Activated CD8-positive, alpha-beta T cell treated with anti-CD3 and anti-CD28 coated beads for 36 hours (primary cell): ENCODE measurements at regions of chr1 and their contacts with region 1.

Region 1: GRCh38 chr1:154558575-154559465 is at the start of gene UBE2Q1:
- DNase-seq: peak; percentile 100
- ATAC-seq: peak; percentile 92
- H3K4me3 Mint-ChIP-seq: peak within 1 kb of the TSS; percentile 95
- H3K27ac Mint-ChIP-seq: peak within 1 kb of the TSS; percentile 96
- H3K4me1 Mint-ChIP-seq: peaks cover 23% of the 10 kb centered on the region
- H3K27me3 Mint-ChIP-seq: no peaks in the 10 kb centered on the region
- CTCF ChIP-seq: no peak
- total RNA-seq, gene UBE2Q1: 71.2 to 74.6 TPM

Region 2: DNA sequence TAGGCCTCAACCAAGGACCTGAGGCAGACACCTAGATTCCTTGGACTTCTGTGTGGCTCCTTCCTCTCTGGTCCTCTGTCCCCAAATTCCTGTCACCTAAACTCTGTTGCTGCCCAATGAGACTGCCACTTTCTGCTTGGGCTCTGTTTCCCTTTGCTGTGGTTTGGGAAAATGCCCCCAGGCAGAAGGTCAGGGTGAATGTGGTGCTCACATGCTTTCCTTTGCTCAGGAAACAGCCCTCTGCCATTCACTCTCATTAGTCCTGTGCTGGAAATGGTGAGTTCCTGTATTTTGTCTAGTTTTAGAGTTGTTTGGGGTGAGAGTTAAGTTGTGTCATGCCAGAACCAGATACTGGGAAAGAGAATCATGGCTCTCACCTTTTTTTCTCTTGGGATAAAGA is 33.9 kb before region 1 on chr1:
- CTCF ChIA-PET with region 1: no interaction called
- POLR2A ChIA-PET with region 1: no interaction called
- intact Hi-C with region 1: no loop called
- DNase-seq: no peak
- ATAC-seq: no peak
- H3K4me3 Mint-ChIP-seq: no peak overlapping the region
- H3K27ac Mint-ChIP-seq: no peak overlapping the region
- H3K4me1 Mint-ChIP-seq: no peaks in the 10 kb centered on the region
- H3K27me3 Mint-ChIP-seq: peaks cover 4% of the 10 kb centered on the region
- CTCF ChIP-seq: no peak

Region 3: GRCh38 chr1:154574716-154575115 is 15.9 kb after region 1 on chr1:
- CTCF ChIA-PET with region 1: interaction called, 23 read pairs
- POLR2A ChIA-PET with region 1: interaction called, 5 read pairs
- intact Hi-C with region 1: no loop called
- DNase-seq: peak; percentile 27
- ATAC-seq: peak; percentile 28
- H3K4me3 Mint-ChIP-seq: no peak overlapping the region
- H3K27ac Mint-ChIP-seq: no peak overlapping the region
- H3K4me1 Mint-ChIP-seq: no peaks in the 10 kb centered on the region
- H3K27me3 Mint-ChIP-seq: no peaks in the 10 kb centered on the region
- CTCF ChIP-seq: no peak

Region 4: GRCh38 chr1:154607609-154608396 is 49.0 kb after region 1 on chr1 and contains the start of gene ADAR:
- CTCF ChIA-PET with region 1: interaction called, 10 read pairs
- POLR2A ChIA-PET with region 1: interaction called, 3 read pairs
- intact Hi-C with region 1: no loop called
- DNase-seq: peak; percentile 95
- ATAC-seq: peak; percentile 78
- H3K4me3 Mint-ChIP-seq: peak within 1 kb of the TSS; percentile 89
- H3K27ac Mint-ChIP-seq: peak within 1 kb of the TSS; percentile 98
- H3K4me1 Mint-ChIP-seq: peaks cover 71% of the 10 kb centered on the region
- H3K27me3 Mint-ChIP-seq: no peaks in the 10 kb centered on the region
- CTCF ChIP-seq: no peak
- total RNA-seq, gene ADAR: 261 to 267 TPM

Region 5: DNA sequence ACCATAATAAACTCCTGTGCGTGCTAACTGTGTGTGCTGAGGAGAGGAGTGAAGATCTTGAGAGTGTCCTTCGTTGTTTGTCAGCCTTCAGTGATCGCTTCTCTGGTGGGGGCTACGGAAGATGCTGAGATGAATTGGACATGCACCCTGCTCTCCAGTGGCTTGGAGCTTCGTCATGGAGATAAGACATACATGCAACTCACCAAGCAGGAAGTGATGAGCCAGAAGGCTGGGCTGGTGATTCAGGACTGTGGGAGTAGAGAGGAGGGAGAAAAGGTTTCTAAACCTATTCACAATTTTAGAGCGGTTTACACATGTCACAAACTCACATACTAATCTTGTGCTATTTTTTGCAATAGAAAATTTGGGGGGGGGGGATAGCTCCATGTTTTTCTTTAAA is 178.0 kb after region 1 on chr1:
- CTCF ChIA-PET with region 1: no interaction called
- POLR2A ChIA-PET with region 1: no interaction called
- intact Hi-C with region 1: no loop called
- DNase-seq: peak; percentile 75
- ATAC-seq: peak; percentile 93
- H3K4me3 Mint-ChIP-seq: no peak overlapping the region
- H3K27ac Mint-ChIP-seq: peak overlapping the region; percentile 72
- H3K4me1 Mint-ChIP-seq: peaks cover 38% of the 10 kb centered on the region
- H3K27me3 Mint-ChIP-seq: peaks cover 9% of the 10 kb centered on the region
- CTCF ChIP-seq: no peak

Region 6: DNA sequence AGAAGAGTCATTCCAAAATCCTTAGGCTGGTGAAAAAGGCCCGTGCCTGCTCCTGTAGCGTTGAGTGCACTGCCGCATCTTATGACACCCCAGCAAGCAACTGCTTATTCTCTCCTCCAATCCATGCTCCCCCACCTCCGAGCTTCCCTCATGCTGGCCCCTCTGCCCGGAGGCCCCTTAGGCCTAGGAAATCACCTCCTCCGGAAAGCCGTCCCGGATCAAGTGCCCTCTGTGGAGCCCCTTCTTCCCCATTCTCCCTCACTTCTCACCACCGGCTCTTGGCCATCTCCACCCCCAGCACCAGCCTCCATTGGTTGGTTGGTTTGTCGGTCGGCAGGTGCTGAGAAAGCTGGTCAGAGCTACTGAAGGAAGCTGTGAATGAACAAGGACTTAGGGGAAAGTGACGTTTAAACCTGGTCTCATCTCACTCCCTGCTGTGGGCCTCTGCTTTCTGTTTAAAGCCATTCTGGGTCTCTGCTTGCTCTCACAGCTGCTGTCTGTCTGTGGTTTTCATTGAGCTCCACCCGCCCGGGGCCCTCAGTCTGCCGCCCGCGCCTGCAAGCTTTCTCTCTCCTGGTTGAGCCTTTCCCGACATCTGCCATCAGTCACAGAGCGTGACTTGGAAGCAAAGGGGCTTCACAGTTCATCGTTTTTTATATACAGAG is 189.1 kb after region 1 on chr1:
- CTCF ChIA-PET with region 1: interaction called, 22 read pairs
- POLR2A ChIA-PET with region 1: interaction called, 3 read pairs
- intact Hi-C with region 1: no loop called
- DNase-seq: peak; percentile 78
- ATAC-seq: peak; percentile 84
- H3K4me3 Mint-ChIP-seq: peak overlapping the region; percentile 68
- H3K27ac Mint-ChIP-seq: peak overlapping the region; percentile 90
- H3K4me1 Mint-ChIP-seq: peaks cover 68% of the 10 kb centered on the region
- H3K27me3 Mint-ChIP-seq: no peaks in the 10 kb centered on the region
- CTCF ChIP-seq: no peak

Region 7: DNA sequence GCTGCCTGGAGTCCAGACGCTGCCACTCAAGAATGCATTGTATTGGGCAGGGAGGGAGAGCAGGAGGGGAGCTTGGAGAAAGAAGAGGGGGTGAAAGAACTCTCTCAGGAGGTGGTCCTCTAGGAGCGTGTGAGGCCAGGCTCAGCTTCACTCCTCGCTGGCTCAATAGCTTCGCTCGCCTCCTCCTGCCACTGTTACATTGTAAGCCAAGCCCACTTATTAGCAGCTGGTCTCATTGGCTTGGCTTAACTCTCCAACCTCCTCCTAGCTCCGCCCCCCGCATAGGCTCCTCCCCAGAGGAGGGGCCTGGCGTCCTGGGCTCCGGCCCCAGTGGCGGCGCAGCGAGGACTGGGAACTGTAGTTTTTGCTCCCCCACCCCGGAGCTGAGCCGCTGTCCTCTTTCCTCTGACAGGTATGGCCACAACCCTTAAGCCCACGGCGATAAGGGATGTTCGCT is 311.3 kb after region 1 on chr1 and contains the start of gene KCNN3:
- CTCF ChIA-PET with region 1: interaction called, 11 read pairs
- POLR2A ChIA-PET with region 1: no interaction called
- intact Hi-C with region 1: loop called (anchors 10 kb)
- DNase-seq: peak; percentile 85
- ATAC-seq: peak; percentile 99
- H3K4me3 Mint-ChIP-seq: no peak within 1 kb of the TSS
- H3K27ac Mint-ChIP-seq: no peak within 1 kb of the TSS
- H3K4me1 Mint-ChIP-seq: peaks cover 29% of the 10 kb centered on the region
- H3K27me3 Mint-ChIP-seq: peaks cover 30% of the 10 kb centered on the region
- CTCF ChIP-seq: no peak
- total RNA-seq, gene KCNN3: 0.11 TPM in 1 of 2 experiments, not detected in the other

Region 8: DNA sequence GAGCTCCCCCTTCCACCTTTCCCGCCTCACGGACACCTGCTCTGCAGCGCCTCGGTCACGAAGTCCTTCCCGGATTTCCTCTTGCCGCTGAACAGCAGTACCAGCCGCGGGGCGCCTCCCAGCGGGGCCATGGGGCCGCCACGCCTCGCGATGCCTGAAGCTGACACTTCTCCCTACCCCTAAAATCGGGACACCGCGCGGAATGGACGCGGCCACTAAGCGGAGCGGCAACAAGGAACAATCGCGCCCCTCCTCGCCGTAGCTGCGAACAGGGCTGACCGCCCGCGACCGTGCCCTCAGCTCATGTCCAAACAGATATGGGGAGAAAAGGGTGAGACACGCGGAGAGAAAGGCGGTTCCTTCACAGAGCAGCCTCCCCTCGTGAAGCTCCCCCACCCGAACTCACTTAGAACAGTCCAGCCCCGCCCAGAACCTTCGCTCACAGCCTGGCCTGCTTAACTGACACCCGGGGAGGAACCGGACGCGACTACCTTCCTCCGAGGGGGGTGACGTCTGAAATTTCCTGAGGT is 377.8 kb after region 1 on chr1 and contains the start of gene PMVK:
- CTCF ChIA-PET with region 1: interaction called, 11 read pairs
- POLR2A ChIA-PET with region 1: no interaction called
- intact Hi-C with region 1: no loop called
- DNase-seq: peak; percentile 97
- ATAC-seq: peak; percentile 90
- H3K4me3 Mint-ChIP-seq: peak within 1 kb of the TSS; percentile 88
- H3K27ac Mint-ChIP-seq: peak within 1 kb of the TSS; percentile 98
- H3K4me1 Mint-ChIP-seq: peaks cover 49% of the 10 kb centered on the region
- H3K27me3 Mint-ChIP-seq: no peaks in the 10 kb centered on the region
- CTCF ChIP-seq: no peak
- total RNA-seq, gene PMVK: 32.3 to 33.2 TPM